Gastrocnemius medialis (tissue), 4 donors: ENCODE measurements at regions of chr1 and their contacts with region 1.

Region 1: DNA sequence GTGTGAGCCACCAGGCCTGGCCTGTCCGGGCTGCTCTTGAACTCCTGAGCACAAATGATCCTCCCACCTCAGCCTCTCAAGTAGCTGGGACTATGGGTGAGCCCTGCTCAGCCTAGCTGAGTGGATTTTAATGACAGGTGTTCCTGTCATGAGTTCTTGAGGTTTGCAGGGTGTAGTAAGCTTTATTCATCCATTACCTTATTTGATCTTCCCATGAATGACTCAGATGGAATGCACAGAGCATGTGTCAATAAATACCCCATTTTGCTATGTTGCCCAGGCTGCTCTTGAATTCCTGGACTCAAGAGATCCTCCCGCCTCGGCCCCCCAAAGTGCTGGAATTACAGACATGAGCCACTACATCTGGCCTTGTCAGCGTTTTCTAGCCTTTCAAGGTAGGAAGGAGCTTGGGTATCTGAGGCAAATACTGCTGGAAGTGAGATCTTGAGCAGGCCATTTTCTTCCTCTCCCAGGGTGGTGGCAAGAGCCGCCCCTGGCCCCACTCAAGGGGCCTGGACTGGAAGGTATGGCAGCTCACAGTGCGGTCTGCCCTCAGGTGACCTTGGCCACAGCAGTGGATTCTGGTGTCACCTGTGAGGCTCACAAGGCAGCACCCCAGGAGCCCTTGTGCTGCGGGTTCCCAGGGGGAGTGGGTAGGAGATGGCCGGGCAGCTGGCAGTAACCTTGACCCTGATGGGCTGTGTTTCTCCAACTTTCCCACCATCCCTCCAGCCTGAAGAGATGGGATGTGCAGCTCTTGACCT is 20.0 kb downstream of the PIK3CD start:
- DNase-seq: no peak
- ATAC-seq: no peak
- H3K4me3 ChIP-seq: no peak overlapping the region
- H3K27ac ChIP-seq: no peak overlapping the region
- H3K4me1 ChIP-seq: no peaks in the 10 kb centered on the region
- H3K27me3 ChIP-seq: peaks cover 0 to 6% (median 0%) of the 10 kb centered on the region in 3 donors
- CTCF ChIP-seq: no peak
- POLR2A ChIP-seq: no peak

Region 2: GRCh38 chr1:9649769-9650168 is 21.8 kb before region 1 on chr1:
- in situ Hi-C with region 1: no loop called
- intact Hi-C with region 1: loop called (anchors 1 kb)
- DNase-seq: no peak
- ATAC-seq: no peak
- H3K4me3 ChIP-seq: no peak overlapping the region
- H3K27ac ChIP-seq: no peak overlapping the region
- H3K4me1 ChIP-seq: peaks cover 4 to 8% of the 10 kb centered on the region in 2 donors
- H3K27me3 ChIP-seq: peaks cover 42 to 47% (median 43%) of the 10 kb centered on the region in 3 donors
- CTCF ChIP-seq: no peak
- POLR2A ChIP-seq: no peak

Region 3: DNA sequence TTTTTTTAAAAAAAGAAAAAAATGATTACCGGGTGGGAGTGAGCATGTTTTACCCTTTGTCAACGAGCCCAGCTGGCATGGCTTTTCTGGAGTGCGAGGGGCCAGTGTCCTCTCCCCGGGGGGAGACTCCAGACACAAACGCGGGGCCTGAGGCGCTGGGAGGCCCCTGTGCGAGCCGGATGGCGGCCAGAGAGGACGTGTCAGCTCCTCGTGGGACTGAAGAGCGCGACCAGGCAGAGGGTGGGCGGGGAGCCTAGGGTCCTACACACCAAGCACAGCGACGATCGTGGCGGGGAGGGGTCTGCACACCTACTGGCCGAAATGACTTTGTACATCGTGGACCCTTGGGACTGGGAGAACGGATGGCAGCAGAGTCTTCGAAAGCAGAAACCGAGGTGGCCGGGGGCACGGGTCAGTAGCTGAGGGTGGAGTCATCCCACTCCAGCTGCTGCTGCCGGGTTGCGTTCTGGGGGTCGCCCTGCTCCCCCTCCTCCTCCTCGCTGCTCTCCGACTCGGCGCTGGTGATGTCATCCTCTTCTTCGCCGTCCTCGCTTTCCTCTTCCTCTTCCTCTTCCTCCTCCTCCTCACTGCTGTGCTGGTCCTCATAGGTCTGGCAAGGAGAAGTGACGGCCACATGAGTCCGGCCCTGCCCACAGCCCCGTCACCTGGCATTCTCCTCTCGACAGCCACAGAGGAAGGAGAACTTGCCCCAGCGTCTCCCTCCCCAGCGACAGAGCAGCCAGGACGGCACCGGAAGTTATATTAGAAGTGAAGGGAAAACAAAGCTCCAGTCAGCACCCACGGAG is 58.7 kb after region 1 on chr1:
- in situ Hi-C with region 1: no loop called
- intact Hi-C with region 1: no loop called
- DNase-seq: peak; percentile 26 to 45
- ATAC-seq: no peak
- H3K4me3 ChIP-seq: no peak overlapping the region
- H3K27ac ChIP-seq: no peak overlapping the region
- H3K4me1 ChIP-seq: no peaks in the 10 kb centered on the region
- H3K27me3 ChIP-seq: no peaks in the 10 kb centered on the region
- CTCF ChIP-seq: no peak
- POLR2A ChIP-seq: no peak